ENCODE measurements at regions of chr7 and their contacts with region 1.

Region 1: GRCh38 chr7:128347647-128348097 is 4.0 kb upstream of the RBM28 start:
- DNase-seq: peak; percentile 73
- ATAC-seq: peak; percentile 66
- H3K4me3 ChIP-seq: no peak overlapping the region
- H3K27ac ChIP-seq: no peak overlapping the region
- H3K4me1 ChIP-seq: no peaks in the 10 kb centered on the region
- H3K27me3 ChIP-seq: no peaks in the 10 kb centered on the region
- CTCF ChIP-seq: peak; percentile 87

Region 2: GRCh38 chr7:128387216-128388144 is 39.8 kb after region 1 on chr7:
- CTCF ChIA-PET with region 1: interaction called, 80 read pairs
- POLR2A ChIA-PET with region 1: interaction called, 4 read pairs
- intact Hi-C with region 1: loop called (anchors 1 kb)
- DNase-seq: peak; percentile 80
- ATAC-seq: peak; percentile 78
- H3K4me3 ChIP-seq: no peak overlapping the region
- H3K27ac ChIP-seq: no peak overlapping the region
- H3K4me1 ChIP-seq: no peaks in the 10 kb centered on the region
- H3K27me3 ChIP-seq: no peaks in the 10 kb centered on the region
- CTCF ChIP-seq: peak; percentile 86